Right ventricle myocardium superior (tissue), 1 donor: ENCODE measurements at regions of chr19 and their contacts with region 1.

Region 1: GRCh38 chr19:41310033-41310758 is at the start of gene CCDC97:
- DNase-seq: peak; percentile 92
- ATAC-seq: peak; percentile 91
- total RNA-seq, gene CCDC97: 14.3 TPM

Region 2: GRCh38 chr19:41206926-41207750 is 103.1 kb before region 1 on chr19:
- intact Hi-C with region 1: loop called (anchors 5 kb)
- DNase-seq: peak; percentile 93
- ATAC-seq: peak; percentile 91

Region 3: DNA sequence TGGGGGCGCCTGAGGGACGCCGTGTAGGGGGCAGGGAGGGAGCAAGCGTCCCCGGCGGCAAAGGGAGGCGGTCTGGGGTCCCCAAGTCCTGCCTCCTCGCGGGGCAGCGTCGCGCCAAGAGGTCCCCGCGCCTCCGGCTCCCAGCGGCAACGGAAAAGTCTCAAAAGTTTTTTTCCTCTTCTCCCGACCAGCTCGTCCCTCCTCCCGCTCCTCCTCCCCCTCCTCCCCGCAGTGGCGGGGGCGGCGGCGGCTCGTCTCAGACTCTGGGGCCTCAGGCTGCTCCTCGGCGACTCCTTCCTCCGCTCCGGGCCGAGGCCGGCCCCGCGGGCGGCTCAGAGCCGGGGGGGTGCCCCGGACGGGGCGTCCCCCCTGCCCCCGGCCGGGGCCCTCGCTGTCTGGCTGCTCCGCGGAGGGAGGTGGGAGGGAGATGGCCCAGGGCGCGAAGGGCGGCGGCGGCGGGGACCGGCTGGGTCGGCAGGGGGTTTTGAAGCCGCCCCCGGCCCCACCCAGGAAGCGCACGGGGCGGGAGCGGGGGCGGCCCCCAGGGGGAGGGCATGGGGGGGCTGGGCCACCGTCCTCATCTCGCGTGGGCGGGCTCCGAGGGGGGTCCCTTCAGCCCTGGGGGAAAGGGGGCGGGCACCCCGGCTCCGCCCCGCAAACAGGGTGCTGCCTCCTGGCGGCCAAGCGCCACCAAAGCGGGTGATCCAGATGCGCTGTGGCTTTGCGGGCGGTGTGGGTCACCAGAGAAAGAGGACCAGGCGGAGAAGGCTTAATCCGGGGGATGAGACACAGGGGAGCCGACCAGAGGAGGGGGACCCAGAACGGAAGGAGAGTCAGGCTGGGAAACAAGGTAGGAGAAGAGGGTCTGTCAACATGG is 43.5 kb after region 1 on chr19 and contains the start of gene TGFB1:
- intact Hi-C with region 1: loop called (anchors 5 kb)
- DNase-seq: peak; percentile 94
- ATAC-seq: peak; percentile 77
- total RNA-seq, gene TGFB1: 13.1 TPM

Region 4: DNA sequence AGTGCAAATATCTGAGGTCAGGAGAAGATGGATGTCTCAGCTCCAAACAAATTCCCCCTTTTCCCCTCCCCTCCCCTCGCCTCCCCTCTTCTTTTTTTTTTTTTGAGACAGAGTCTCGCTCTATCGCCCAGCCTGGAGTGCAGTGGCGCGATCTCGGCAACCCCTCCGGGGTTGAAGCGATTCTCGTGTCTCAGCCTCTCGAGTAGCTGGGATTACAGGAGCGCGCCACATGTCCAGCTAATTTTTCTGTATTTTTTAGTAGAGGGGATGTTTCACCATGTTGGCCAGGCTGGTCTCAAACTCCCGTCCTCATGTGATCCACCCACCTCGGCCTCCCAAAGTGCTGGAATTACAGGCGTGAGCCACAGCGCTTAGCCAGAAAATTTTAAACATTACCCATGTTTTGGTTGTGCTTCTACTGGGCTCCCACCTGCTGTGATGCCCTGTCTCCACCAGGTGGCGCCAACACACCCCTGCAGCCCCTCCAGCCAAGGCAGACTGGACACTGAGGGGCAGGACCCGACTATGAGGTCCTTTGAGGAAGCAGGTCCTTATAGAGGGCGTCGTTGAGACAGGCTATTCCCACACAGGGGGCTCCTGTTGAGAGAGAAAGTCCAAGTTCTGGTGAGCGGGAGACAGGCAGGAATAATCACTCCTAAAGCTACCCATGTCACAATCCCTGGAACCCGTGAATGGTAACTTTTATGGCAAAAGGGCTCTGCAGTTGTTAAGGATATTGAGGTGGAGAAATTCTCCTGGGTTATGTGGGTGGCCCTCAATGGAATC is 139.1 kb after region 1 on chr19:
- intact Hi-C with region 1: no loop called
- DNase-seq: peak; percentile 83
- ATAC-seq: peak; percentile 95